ENCODE measurements at regions of chr7 and their contacts with region 1.

Region 1: GRCh38 chr7:99504603-99505323 is at the start of gene ZKSCAN5:
- DNase-seq: peak; percentile 98
- ATAC-seq: peak; percentile 87
- H3K4me3 ChIP-seq: peak within 1 kb of the TSS; percentile 80 to 86
- H3K27ac ChIP-seq: peak within 1 kb of the TSS; percentile 97
- H3K4me1 ChIP-seq: 0 out of 2 replicates have a peak, but pooled peaks cover 3% of the 10 kb centered on the region
- H3K27me3 ChIP-seq: no peaks in the 10 kb centered on the region
- CTCF ChIP-seq: no peak
- total RNA-seq, gene ZKSCAN5: 17.5 TPM

Region 2: GRCh38 chr7:99489235-99489634 is 15.5 kb before region 1 on chr7:
- CTCF ChIA-PET with region 1: interaction called, 9 read pairs
- POLR2A ChIA-PET with region 1: interaction called, 10 read pairs
- in situ Hi-C with region 1: no loop called
- intact Hi-C with region 1: no loop called
- DNase-seq: no peak
- ATAC-seq: peak; percentile 47; the same call in 1 of the 2 replicates
- H3K4me3 ChIP-seq: no peak overlapping the region
- H3K27ac ChIP-seq: no peak overlapping the region
- H3K4me1 ChIP-seq: no peaks in the 10 kb centered on the region
- H3K27me3 ChIP-seq: no peaks in the 10 kb centered on the region
- CTCF ChIP-seq: no peak

Region 3: GRCh38 chr7:99551767-99552463 is 47.2 kb after region 1 on chr7 and contains the start of gene FAM200A:
- CTCF ChIA-PET with region 1: no interaction called
- POLR2A ChIA-PET with region 1: interaction called, 3 read pairs
- in situ Hi-C with region 1: no loop called
- intact Hi-C with region 1: loop called (anchors 10 kb)
- DNase-seq: peak; percentile 72
- ATAC-seq: peak; percentile 100
- H3K4me3 ChIP-seq: peak within 1 kb of the TSS; percentile 96 to 97
- H3K27ac ChIP-seq: peak within 1 kb of the TSS; percentile 85
- H3K4me1 ChIP-seq: no peaks in the 10 kb centered on the region
- H3K27me3 ChIP-seq: no peaks in the 10 kb centered on the region
- CTCF ChIP-seq: no peak
- total RNA-seq, gene FAM200A: 4.6 TPM

Region 4: GRCh38 chr7:100059251-100059739 is 554.5 kb after region 1 on chr7:
- CTCF ChIA-PET with region 1: no interaction called
- POLR2A ChIA-PET with region 1: no interaction called
- in situ Hi-C with region 1: no loop called
- intact Hi-C with region 1: loop called (anchors 5 kb)
- DNase-seq: no peak
- ATAC-seq: no peak
- H3K4me3 ChIP-seq: no peak overlapping the region
- H3K27ac ChIP-seq: no peak overlapping the region
- H3K4me1 ChIP-seq: no peaks in the 10 kb centered on the region
- H3K27me3 ChIP-seq: no peaks in the 10 kb centered on the region
- CTCF ChIP-seq: no peak

Region 5: GRCh38 chr7:100456558-100456957 is 951.8 kb after region 1 on chr7:
- CTCF ChIA-PET with region 1: no interaction called
- POLR2A ChIA-PET with region 1: no interaction called
- in situ Hi-C with region 1: no loop called
- intact Hi-C with region 1: no loop called
- DNase-seq: no peak
- ATAC-seq: no peak
- H3K4me3 ChIP-seq: no peak overlapping the region
- H3K27ac ChIP-seq: no peak overlapping the region
- H3K4me1 ChIP-seq: no peaks in the 10 kb centered on the region
- H3K27me3 ChIP-seq: no peaks in the 10 kb centered on the region
- CTCF ChIP-seq: no peak

Measured in Panc1 (cell line).